T-cell (primary cell): ENCODE measurements at regions of chr5 and their contacts with region 1.

Region 1: GRCh38 chr5:143435210-143435657 is 31.7 kb upstream of the NR3C1 start:
- DNase-seq: peak in 29 of 35 experiments; percentile 9 to 72 (median 30)
- ATAC-seq: peak; percentile 63 to 81 (median 72)
- H3K4me3 ChIP-seq: peak overlapping the region; percentile 52 to 58
- H3K4me3 Mint-ChIP-seq: peak overlapping the region; percentile 91 to 94 (median 92)
- H3K27ac ChIP-seq: peak overlapping the region; percentile 86
- H3K27ac Mint-ChIP-seq: peak overlapping the region; percentile 99 to 100
- H3K4me1 ChIP-seq: peaks cover 13 to 14% of the 10 kb centered on the region in 2 experiments
- H3K4me1 Mint-ChIP-seq: peaks cover 66 to 70% (median 69%) of the 10 kb centered on the region in 3 donors
- H3K27me3 ChIP-seq: no peaks in the 10 kb centered on the region
- H3K27me3 Mint-ChIP-seq: no peaks in the 10 kb centered on the region

Region 2: DNA sequence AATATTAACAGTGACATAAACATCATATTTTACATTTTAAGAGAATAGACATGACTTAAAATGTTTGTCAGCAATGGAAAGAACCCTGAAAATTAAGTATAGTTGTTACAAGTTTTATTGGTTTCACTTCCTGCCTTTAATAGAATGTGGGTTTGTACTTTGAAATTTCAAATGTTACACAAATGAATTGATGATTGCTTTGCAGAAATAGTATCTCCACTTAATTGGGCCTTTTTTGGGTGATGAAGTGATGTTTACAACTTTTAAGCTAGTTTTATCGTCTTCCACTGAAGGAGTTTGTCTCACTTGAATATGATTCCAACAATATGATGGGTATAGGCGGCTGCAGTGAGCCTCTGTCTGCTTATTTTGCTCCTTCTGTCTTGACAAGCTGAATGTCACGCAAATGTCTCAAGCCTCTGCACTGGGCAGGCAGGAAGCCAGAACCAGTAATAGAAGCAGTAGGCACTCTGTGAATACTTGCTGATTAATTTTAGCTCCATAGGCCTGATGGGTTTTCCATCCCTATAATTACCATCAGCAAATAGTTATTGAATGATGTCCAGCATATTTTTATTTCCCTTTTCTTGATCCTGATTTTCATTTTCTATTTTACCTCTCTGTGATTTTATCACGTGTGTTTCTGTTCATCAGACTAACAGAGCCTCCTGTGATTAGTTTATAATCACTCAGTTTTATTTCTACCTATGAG is 21.1 kb before region 1 on chr5:
- CTCF ChIA-PET with region 1: interaction called in 1 of 2 experiments, 4 read pairs
- POLR2A ChIA-PET with region 1: interaction called, 6 to 16 read pairs
- DNase-seq: no peak
- ATAC-seq: peak in 3 of 4 experiments; percentile 36 to 66 (median 63)
- H3K4me3 ChIP-seq: no peak overlapping the region
- H3K4me3 Mint-ChIP-seq: peak overlapping the region in 1 of 3 donors; percentile 38
- H3K27ac ChIP-seq: no peak overlapping the region
- H3K27ac Mint-ChIP-seq: peak overlapping the region; percentile 46 to 79
- H3K4me1 ChIP-seq: peaks cover 0 to 12% of the 10 kb centered on the region in 2 experiments
- H3K4me1 Mint-ChIP-seq: peaks cover 10 to 65% (median 30%) of the 10 kb centered on the region in 3 donors
- H3K27me3 ChIP-seq: no peaks in the 10 kb centered on the region
- H3K27me3 Mint-ChIP-seq: no peaks in the 10 kb centered on the region